CD4-positive, alpha-beta memory T cell (primary cell): ENCODE measurements at regions of chr17 and their contacts with region 1.

Region 1: GRCh38 chr17:46995841-46996571 is 17.0 kb upstream of the RPRML start:
- DNase-seq: no peak
- H3K4me3 ChIP-seq: no peak overlapping the region
- H3K4me3 Mint-ChIP-seq: no peak overlapping the region
- H3K27ac ChIP-seq: no peak overlapping the region
- H3K27ac Mint-ChIP-seq: peak overlapping the region in 1 of 7 donors; percentile 73
- H3K4me1 ChIP-seq: peaks cover 3% of the 10 kb centered on the region
- H3K4me1 Mint-ChIP-seq: peaks cover 0 to under 1% (median under 1%) of the 10 kb centered on the region in 4 donors
- H3K27me3 ChIP-seq: no peaks in the 10 kb centered on the region
- H3K27me3 Mint-ChIP-seq: no peaks in the 10 kb centered on the region

Region 2: GRCh38 chr17:47315451-47316266 is 319.7 kb after region 1 on chr17:
- CTCF ChIA-PET with region 1: interaction called, 3 read pairs
- POLR2A ChIA-PET with region 1: no interaction called
- intact Hi-C with region 1: loop called (anchors 1 kb)
- DNase-seq: peak in 4 of 5 donors; percentile 50 to 56 (median 52)
- H3K4me3 ChIP-seq: no peak overlapping the region
- H3K4me3 Mint-ChIP-seq: no peak overlapping the region
- H3K27ac ChIP-seq: no peak overlapping the region
- H3K27ac Mint-ChIP-seq: no peak overlapping the region
- H3K4me1 ChIP-seq: no peaks in the 10 kb centered on the region
- H3K4me1 Mint-ChIP-seq: no peaks in the 10 kb centered on the region
- H3K27me3 ChIP-seq: no peaks in the 10 kb centered on the region
- H3K27me3 Mint-ChIP-seq: peaks cover 0 to 1% of the 10 kb centered on the region in 2 donors